ENCODE measurements at regions of chr15 and their contacts with region 1.

Region 1: GRCh38 chr15:95957861-95958260 is 372.6 kb upstream of the NR2F2 start:
- DNase-seq: no peak

Region 2: GRCh38 chr15:95761501-95762165 is 196.2 kb before region 1 on chr15:
- CTCF ChIA-PET with region 1: interaction called, 10 read pairs
- POLR2A ChIA-PET with region 1: no interaction called
- DNase-seq: no peak

Region 3: DNA sequence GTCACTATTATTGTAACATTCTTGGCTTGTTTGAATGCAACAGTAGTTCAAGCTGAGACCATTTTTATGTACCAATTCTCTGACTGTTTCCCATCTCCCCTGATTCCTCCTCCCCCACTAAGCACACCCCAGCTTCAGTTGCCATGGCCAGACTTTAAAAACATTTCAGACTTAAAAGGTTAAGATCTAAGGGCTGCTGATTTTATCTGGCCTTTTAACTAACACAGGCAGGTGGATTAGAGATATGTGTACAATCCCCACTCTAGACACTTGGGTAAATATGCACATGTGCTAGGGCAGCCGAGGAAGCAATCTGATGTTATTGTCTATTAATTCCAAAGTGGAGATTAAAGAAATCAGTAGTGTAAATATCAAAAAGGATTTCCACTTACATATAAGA is 13.6 kb before region 1 on chr15:
- CTCF ChIA-PET with region 1: no interaction called
- POLR2A ChIA-PET with region 1: no interaction called
- DNase-seq: no peak

Measured in HEK293T (cell line).